Esophagus muscularis mucosa (tissue), 4 donors: ENCODE measurements at regions of chr6 and their contacts with region 1.

Region 1: GRCh38 chr6:82260997-82261686 is 13.6 kb upstream of the IBTK start:
- DNase-seq: no peak
- H3K4me3 ChIP-seq: no peak overlapping the region
- H3K27ac ChIP-seq: peak overlapping the region in 3 of 4 donors; percentile 10 to 49 (median 31)
- H3K4me1 ChIP-seq: peaks cover 6 to 26% (median 23%) of the 10 kb centered on the region in 4 donors
- H3K27me3 ChIP-seq: no peaks in the 10 kb centered on the region
- CTCF ChIP-seq: no peak
- EP300 ChIP-seq: no peak
- POLR2A ChIP-seq: no peak

Region 2: GRCh38 chr6:82111114-82111513 is 150.0 kb before region 1 on chr6:
- intact Hi-C with region 1: no loop called
- DNase-seq: no peak
- H3K4me3 ChIP-seq: no peak overlapping the region
- H3K27ac ChIP-seq: no peak overlapping the region
- H3K4me1 ChIP-seq: no peaks in the 10 kb centered on the region
- H3K27me3 ChIP-seq: no peaks in the 10 kb centered on the region
- CTCF ChIP-seq: no peak
- EP300 ChIP-seq: no peak
- POLR2A ChIP-seq: no peak

Region 3: GRCh38 chr6:82217018-82217586 is 44.0 kb before region 1 on chr6:
- intact Hi-C with region 1: no loop called
- DNase-seq: no peak
- H3K4me3 ChIP-seq: no peak overlapping the region
- H3K27ac ChIP-seq: no peak overlapping the region
- H3K4me1 ChIP-seq: no peaks in the 10 kb centered on the region
- H3K27me3 ChIP-seq: no peaks in the 10 kb centered on the region
- CTCF ChIP-seq: no peak
- EP300 ChIP-seq: no peak
- POLR2A ChIP-seq: no peak

Region 4: GRCh38 chr6:82693094-82693493 is 432.0 kb after region 1 on chr6:
- intact Hi-C with region 1: loop called (anchors 10 kb)
- DNase-seq: no peak
- H3K4me3 ChIP-seq: no peak overlapping the region
- H3K27ac ChIP-seq: no peak overlapping the region
- H3K4me1 ChIP-seq: peaks cover 0 to 24% (median 19%) of the 10 kb centered on the region in 4 donors
- H3K27me3 ChIP-seq: no peaks in the 10 kb centered on the region
- CTCF ChIP-seq: no peak
- EP300 ChIP-seq: no peak
- POLR2A ChIP-seq: no peak